ENCODE measurements at regions of chr6 and their contacts with region 1.

Region 1: GRCh38 chr6:32413427-32414047 is 6.6 kb upstream of the BTNL2 start:
- DNase-seq: peak; percentile 3
- H3K4me3 ChIP-seq: no peak overlapping the region
- H3K27me3 ChIP-seq: peaks cover 3% of the 10 kb centered on the region
- CTCF ChIP-seq: peak; percentile 93

Region 2: GRCh38 chr6:32382757-32383156 is 30.8 kb before region 1 on chr6:
- CTCF ChIA-PET with region 1: no interaction called
- POLR2A ChIA-PET with region 1: no interaction called
- DNase-seq: no peak
- H3K4me3 ChIP-seq: no peak overlapping the region
- H3K27me3 ChIP-seq: no peaks in the 10 kb centered on the region
- CTCF ChIP-seq: no peak

Region 3: DNA sequence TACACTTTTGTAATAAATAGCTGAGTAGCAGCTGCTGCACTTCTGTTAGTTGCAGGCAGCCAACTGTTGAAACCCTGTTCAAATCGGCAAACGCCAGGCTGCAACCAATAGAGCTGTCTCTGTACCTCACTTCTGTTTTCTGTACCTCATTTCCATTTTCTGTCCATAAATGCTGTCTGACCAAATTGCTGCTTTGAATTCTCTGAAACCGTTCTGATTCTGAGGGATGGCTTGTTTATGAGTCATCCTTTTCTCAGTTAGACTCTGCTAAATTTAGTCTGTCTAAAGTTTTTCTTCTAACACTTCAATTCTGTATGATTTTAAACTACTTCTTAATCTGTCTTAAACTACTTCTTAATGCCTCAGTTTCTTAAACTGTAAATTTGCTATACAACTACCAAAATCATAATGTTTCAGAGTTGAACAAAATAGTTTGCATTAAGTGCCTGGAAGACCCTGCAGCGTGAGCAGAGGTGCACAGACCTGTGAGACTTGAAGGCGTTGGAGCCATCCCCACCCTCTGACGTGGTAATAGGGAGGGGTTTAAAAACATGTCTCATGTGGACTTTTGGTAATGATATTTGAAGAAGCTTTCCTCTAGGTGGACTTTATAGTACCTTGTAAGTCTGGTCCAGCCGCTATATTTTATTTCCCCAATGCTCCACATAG is 16.2 kb before region 1 on chr6:
- CTCF ChIA-PET with region 1: interaction called, 53 read pairs
- POLR2A ChIA-PET with region 1: no interaction called
- DNase-seq: no peak
- H3K4me3 ChIP-seq: no peak overlapping the region
- H3K27me3 ChIP-seq: no peaks in the 10 kb centered on the region
- CTCF ChIP-seq: no peak

Region 4: DNA sequence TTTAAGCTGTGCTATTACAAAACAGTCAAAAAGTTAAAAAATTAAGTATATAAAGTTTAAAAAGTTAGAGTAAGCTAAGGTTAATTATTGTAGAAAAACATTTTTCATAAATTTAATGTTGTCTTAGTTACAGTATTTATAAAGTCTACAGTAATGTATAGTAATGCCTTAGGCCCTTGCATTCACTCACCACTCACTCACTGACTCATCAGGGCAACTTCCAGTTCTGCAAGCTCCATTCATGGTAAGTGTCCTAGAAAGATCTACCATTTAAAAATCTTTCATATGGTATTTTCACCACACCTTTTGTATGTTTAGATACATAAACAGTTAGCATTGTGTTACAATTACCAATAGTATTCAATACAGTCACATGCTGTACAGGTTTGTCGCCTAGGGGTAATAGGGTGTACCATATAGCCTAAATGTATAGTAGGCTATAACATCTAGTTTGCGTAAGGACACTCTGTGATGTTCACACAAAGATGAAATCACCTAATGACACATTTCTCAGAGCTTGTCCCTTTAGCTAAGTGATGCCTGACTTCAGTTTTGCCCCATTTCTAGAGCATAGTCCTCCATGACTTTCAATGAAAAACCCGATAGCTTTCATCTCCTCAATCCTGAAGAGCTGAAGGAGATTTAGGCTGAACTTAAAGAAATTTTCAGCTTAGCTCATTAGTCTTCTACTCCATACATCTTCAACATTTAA is 11.2 kb after region 1 on chr6:
- CTCF ChIA-PET with region 1: interaction called, 36 read pairs
- POLR2A ChIA-PET with region 1: no interaction called
- DNase-seq: no peak
- H3K4me3 ChIP-seq: no peak overlapping the region
- H3K27me3 ChIP-seq: no peaks in the 10 kb centered on the region; the same call in 1 of the 2 replicates
- CTCF ChIP-seq: no peak

Region 5: GRCh38 chr6:32472781-32473375 is 59.3 kb after region 1 on chr6:
- CTCF ChIA-PET with region 1: no interaction called
- POLR2A ChIA-PET with region 1: no interaction called
- DNase-seq: no peak
- H3K4me3 ChIP-seq: no peak overlapping the region
- H3K27me3 ChIP-seq: no peaks in the 10 kb centered on the region
- CTCF ChIP-seq: no peak

Region 6: DNA sequence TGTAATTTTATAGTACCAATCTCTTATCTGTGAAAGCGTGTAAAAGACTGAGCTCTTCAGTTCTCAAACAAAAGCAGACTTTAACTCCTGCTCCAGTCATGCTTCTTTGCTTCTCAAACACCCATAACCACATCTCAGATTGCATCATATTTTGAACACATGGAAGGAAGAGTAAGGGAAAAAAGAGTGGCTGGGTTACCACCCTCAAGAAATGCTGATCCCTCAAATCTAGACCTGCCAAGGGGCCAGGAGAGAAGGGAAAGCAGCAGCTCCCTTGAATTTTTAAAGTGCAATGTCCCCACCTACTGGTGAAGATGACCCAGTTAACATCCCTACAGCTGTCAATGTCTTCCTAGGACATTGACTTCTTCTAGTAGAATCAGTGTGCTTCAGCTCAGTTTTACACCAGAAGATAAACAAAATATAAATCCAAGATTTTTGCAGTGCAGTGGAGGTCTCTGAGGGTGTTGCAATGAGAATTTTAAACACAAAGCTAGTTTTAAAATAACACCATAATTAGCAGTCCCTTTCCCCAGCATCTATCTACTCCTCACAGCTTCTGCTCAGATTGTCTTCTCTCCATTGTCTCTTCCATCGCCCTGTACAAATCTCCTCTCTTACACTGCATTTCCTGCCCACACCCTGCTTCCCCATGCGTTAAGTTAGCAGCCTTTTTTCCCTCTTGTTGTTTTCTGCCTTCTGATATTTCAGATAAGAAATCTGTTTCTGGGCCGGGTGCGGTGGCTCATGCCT is 372.4 kb after region 1 on chr6:
- CTCF ChIA-PET with region 1: interaction called, 32 read pairs
- POLR2A ChIA-PET with region 1: no interaction called
- DNase-seq: no peak
- H3K4me3 ChIP-seq: no peak overlapping the region
- H3K27me3 ChIP-seq: no peaks in the 10 kb centered on the region
- CTCF ChIP-seq: peak; percentile 62

Region 7: GRCh38 chr6:32868257-32868788 is 454.8 kb after region 1 on chr6:
- CTCF ChIA-PET with region 1: interaction called, 15 read pairs
- POLR2A ChIA-PET with region 1: no interaction called
- DNase-seq: no peak
- H3K4me3 ChIP-seq: no peak overlapping the region
- H3K27me3 ChIP-seq: peaks cover 6% of the 10 kb centered on the region
- CTCF ChIP-seq: peak; percentile 87